Dorsolateral prefrontal cortex (tissue), 120 donors: ENCODE measurements at regions of chr6 and their contacts with region 1.

Region 1: GRCh38 chr6:115310156-115310555 is 750.5 kb downstream of the FRK start:
- DNase-seq: no peak
- H3K4me3 ChIP-seq: no peak overlapping the region
- H3K27ac ChIP-seq: no peak overlapping the region
- H3K27me3 ChIP-seq: no peaks in the 10 kb centered on the region
- CTCF ChIP-seq: no peak

Region 2: GRCh38 chr6:114055349-114055748 is 1254.8 kb before region 1 on chr6:
- intact Hi-C with region 1: no loop called
- DNase-seq: peak in 2 of 10 donors; percentile 20 to 38
- H3K4me3 ChIP-seq: peak overlapping the region in 2 of 59 donors; percentile 11 to 19
- H3K27ac ChIP-seq: peak overlapping the region in 49 of 59 donors; percentile 2 to 76 (median 57)
- H3K27me3 ChIP-seq: no peaks in the 10 kb centered on the region
- CTCF ChIP-seq: no peak

Region 3: GRCh38 chr6:115613488-115613887 is 303.3 kb after region 1 on chr6:
- intact Hi-C with region 1: no loop called
- DNase-seq: no peak
- H3K4me3 ChIP-seq: no peak overlapping the region
- H3K27ac ChIP-seq: no peak overlapping the region
- H3K27me3 ChIP-seq: peaks cover 0 to 2% (median 0%) of the 10 kb centered on the region in 45 donors
- CTCF ChIP-seq: no peak

Region 4: DNA sequence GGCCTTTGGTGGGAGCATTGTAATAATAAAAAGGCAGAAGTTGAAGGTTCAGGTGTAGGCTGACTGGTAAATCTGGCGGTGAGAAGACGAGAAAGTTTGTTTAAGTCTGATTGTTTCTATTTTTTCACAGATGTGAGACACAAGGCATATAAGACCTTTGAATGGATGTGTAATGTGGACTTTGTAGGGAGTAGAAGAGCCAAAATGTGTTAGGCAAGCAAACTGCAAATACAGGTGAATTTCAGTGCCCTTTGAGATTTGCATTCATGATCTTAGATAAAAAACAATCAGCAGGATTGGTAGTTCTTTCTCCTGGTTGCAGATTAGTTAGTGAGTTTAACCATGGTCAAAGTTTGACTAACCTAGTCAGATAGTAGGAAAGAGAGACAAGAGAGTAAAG is 511.6 kb after region 1 on chr6:
- intact Hi-C with region 1: loop called in 1 of 2 experiments (anchors 5 kb)
- DNase-seq: no peak
- H3K4me3 ChIP-seq: no peak overlapping the region
- H3K27ac ChIP-seq: no peak overlapping the region
- H3K27me3 ChIP-seq: no peaks in the 10 kb centered on the region
- CTCF ChIP-seq: no peak